ENCODE measurements at regions of chrX and their contacts with region 1.

Region 1: DNA sequence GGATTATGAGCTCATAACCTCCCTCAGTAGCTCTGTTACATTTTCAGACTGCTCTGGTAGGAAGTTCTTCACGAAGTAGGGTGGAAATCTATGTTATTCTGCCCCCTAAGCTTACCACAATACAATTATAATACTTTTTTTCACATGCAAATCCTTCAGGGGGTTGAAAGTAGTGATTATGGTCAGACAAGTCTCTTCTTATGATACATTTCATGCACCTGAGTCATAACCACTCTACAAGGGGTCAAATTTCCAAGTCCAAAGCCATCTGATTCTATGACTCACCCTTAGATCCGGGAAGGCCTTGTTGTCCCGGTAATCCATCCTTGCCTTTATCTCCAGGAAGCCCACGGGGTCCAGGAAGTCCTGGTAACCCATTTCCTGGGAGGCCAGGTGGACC is 95.2 kb downstream of the ATG4A start:
- DNase-seq: peak; percentile 41 to 87
- H3K4me3 ChIP-seq: no peak overlapping the region
- H3K27ac ChIP-seq: 0 out of 2 replicates have a peak overlapping the region, but pooled peaks have one; percentile 11
- H3K4me1 ChIP-seq: peaks cover 14% of the 10 kb centered on the region; the same call in 1 of the 2 replicates
- H3K27me3 ChIP-seq: no peaks in the 10 kb centered on the region
- CTCF ChIP-seq: no peak

Region 2: GRCh38 chrX:107968623-107969022 is 218.2 kb before region 1 on chrX:
- CTCF ChIA-PET with region 1: no interaction called
- POLR2A ChIA-PET with region 1: no interaction called
- intact Hi-C with region 1: no loop called
- DNase-seq: no peak
- H3K4me3 ChIP-seq: no peak overlapping the region
- H3K27ac ChIP-seq: no peak overlapping the region
- H3K4me1 ChIP-seq: no peaks in the 10 kb centered on the region
- H3K27me3 ChIP-seq: no peaks in the 10 kb centered on the region
- CTCF ChIP-seq: no peak

Region 3: DNA sequence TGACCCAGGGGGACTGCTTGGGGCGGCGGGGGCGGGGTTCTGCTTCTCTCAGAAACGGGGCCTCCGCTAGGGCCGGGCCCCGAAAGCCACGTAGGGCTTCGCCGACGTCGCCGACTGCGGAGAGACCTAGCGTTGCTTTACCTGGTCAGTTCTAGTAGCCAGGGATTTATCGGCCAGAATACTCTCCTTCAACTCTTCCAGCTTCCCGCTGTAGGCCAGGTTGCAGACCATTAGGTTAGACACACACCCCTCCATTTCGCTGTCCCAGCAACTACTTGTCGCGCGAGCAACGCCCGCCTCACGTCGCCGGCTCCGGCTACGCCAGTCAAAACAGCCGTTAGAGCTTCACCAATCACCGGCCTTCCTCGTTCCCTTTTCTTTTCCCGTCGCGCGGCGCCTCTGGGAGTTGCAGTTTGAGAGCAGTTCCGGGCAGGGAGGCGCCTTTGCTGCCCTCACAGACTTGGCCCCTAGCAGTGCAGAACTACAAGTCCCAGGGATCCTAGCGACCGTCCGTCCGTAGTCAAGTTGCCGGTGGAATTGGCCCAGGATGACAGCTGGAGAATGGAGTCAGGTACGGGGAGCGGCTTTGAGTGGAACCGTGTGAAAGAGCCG is 95.4 kb before region 1 on chrX and contains the starts of genes ATG4A and PSMD10:
- CTCF ChIA-PET with region 1: no interaction called
- POLR2A ChIA-PET with region 1: no interaction called
- intact Hi-C with region 1: loop called (anchors 2 kb)
- DNase-seq: peak; percentile 97
- H3K4me3 ChIP-seq: peak within 1 kb of the TSS; percentile 84
- H3K27ac ChIP-seq: peak within 1 kb of the TSS; percentile 80
- H3K4me1 ChIP-seq: peaks cover 23% of the 10 kb centered on the region
- H3K27me3 ChIP-seq: no peaks in the 10 kb centered on the region
- CTCF ChIP-seq: no peak; the same call in 1 of the 2 replicates
- total RNA-seq, gene ATG4A: 5.8 and 9.6 TPM in 2 replicates
- total RNA-seq, gene PSMD10: 106 and 127 TPM in 2 replicates

Region 4: GRCh38 chrX:108216919-108217571 is 30.2 kb after region 1 on chrX:
- CTCF ChIA-PET with region 1: no interaction called
- POLR2A ChIA-PET with region 1: no interaction called
- intact Hi-C with region 1: no loop called
- DNase-seq: no peak
- H3K4me3 ChIP-seq: no peak overlapping the region
- H3K27ac ChIP-seq: no peak overlapping the region
- H3K4me1 ChIP-seq: no peaks in the 10 kb centered on the region
- H3K27me3 ChIP-seq: no peaks in the 10 kb centered on the region
- CTCF ChIP-seq: no peak

Region 5: GRCh38 chrX:108304210-108304609 is 117.4 kb after region 1 on chrX:
- CTCF ChIA-PET with region 1: no interaction called
- POLR2A ChIA-PET with region 1: no interaction called
- intact Hi-C with region 1: no loop called
- DNase-seq: no peak
- H3K4me3 ChIP-seq: no peak overlapping the region
- H3K27ac ChIP-seq: no peak overlapping the region
- H3K4me1 ChIP-seq: no peaks in the 10 kb centered on the region
- H3K27me3 ChIP-seq: no peaks in the 10 kb centered on the region
- CTCF ChIP-seq: peak; percentile 58

Region 6: DNA sequence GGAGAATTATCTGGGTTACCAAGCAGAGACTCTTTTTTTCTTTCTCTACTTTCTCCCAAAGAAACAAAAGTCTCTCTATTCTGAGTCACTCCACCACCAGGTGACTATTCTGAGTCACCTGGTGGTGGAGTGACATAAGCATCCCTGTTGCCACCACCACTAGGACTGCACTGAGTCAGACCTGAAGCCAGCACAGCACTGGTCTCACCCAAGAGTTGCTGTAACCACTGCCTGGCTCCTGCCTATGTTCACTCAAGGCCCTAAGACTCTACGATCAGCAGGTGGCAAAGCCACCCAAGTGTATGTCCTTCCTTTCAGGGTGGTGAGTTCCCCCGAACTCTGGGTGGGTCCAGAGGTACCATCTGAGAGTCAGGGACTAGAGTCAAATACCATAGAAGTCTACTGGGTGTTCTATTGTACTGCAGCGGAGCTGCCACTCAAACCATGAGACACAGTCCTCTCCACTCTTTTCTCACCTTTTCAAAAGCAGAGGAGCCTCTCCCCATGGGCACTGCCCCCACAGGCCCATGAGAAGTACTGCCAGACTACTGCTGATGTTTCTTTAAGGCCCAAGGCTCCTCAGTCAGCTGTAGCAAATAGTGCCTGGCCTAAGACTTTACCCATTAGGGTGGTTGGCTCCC is 759.2 kb after region 1 on chrX:
- CTCF ChIA-PET with region 1: no interaction called
- POLR2A ChIA-PET with region 1: no interaction called
- intact Hi-C with region 1: no loop called
- DNase-seq: peak in 1 of 2 experiments; percentile 60
- H3K4me3 ChIP-seq: no peak overlapping the region
- H3K27ac ChIP-seq: no peak overlapping the region
- H3K4me1 ChIP-seq: no peaks in the 10 kb centered on the region
- H3K27me3 ChIP-seq: no peaks in the 10 kb centered on the region
- CTCF ChIP-seq: no peak